ENCODE measurements at regions of chr15 and their contacts with region 1.

Region 1: DNA sequence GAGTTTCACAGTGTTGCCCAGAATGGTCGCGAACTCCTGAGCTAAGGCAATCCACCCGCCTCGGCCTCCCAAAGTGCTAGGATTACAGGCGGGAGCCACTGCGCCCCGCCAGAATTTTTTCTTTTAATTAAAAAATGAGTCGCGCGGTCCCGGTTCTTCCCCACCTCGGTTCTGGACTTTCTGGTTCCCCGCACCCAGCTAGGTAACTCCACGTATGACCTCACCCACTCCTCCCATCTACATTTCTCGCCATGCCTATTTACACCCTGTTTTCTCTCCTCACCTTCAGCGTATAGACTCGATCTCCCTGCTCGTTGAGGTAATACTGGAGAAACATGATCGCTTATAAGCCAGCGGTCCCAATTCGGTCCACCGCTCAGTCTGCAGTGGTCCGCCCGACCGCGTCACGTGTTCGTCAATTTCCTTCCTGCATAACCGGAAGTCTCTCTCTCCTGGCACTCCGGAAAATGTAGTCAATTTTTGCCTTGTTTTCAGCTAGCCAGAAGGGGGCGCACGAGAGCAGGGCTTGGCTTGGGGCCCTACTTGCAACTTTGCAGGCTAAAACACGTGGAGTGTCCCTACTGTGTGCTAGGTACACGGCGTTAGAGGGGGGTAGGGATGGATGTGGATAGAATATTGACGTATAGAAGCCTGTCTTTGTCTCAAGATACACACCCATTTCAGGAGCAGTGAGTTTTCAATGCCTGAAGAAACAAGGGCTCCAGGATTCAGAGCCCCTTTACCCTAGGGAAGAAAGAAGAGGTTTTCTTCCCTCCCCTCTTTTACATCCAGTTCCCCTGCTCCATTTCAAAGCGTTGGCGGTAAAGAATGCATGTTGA is at the starts of genes NOP10 and NUTM1:
- DNase-seq: peak; percentile 87
- ATAC-seq: peak; percentile 91
- H3K4me3 ChIP-seq: peak within 1 kb of the TSS; percentile 81 to 82
- H3K27ac ChIP-seq: peak within 1 kb of the TSS; percentile 96
- H3K4me1 ChIP-seq: peaks cover 23% of the 10 kb centered on the region
- H3K27me3 ChIP-seq: no peaks in the 10 kb centered on the region
- CTCF ChIP-seq: peak; percentile 99
- total RNA-seq, gene NOP10: 306 TPM
- total RNA-seq, gene NUTM1: 0.05 TPM

Region 2: DNA sequence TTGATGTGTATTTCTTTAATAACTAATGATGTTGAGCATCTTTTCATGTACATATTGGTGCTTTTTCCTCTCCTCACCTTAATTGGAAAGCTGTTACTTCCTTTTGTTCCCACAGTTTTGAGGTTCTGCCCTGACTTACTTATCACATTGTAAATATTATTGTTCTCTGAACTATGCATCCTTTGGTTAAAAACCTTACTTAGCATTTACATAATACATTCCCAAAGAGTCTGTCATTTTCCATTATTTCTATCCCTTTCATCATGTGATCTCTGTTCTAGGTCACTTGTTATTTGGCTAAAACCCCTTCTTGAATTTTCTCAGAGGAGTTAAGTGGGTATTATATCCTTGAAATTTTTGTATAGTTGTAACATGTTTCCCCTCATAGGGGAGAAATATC is 38.3 kb before region 1 on chr15:
- CTCF ChIA-PET with region 1: interaction called, 4 read pairs
- POLR2A ChIA-PET with region 1: interaction called, 15 read pairs
- in situ Hi-C with region 1: no loop called
- intact Hi-C with region 1: no loop called
- DNase-seq: no peak
- ATAC-seq: no peak
- H3K4me3 ChIP-seq: no peak overlapping the region
- H3K27ac ChIP-seq: no peak overlapping the region
- H3K4me1 ChIP-seq: no peaks in the 10 kb centered on the region
- H3K27me3 ChIP-seq: no peaks in the 10 kb centered on the region
- CTCF ChIP-seq: no peak

Region 3: GRCh38 chr15:34355241-34355640 is 12.3 kb after region 1 on chr15:
- CTCF ChIA-PET with region 1: interaction called, 12 read pairs
- POLR2A ChIA-PET with region 1: interaction called, 5 read pairs
- in situ Hi-C with region 1: no loop called
- intact Hi-C with region 1: no loop called
- DNase-seq: no peak
- ATAC-seq: no peak
- H3K4me3 ChIP-seq: no peak overlapping the region
- H3K27ac ChIP-seq: no peak overlapping the region
- H3K4me1 ChIP-seq: no peaks in the 10 kb centered on the region
- H3K27me3 ChIP-seq: no peaks in the 10 kb centered on the region
- CTCF ChIP-seq: no peak

Region 4: GRCh38 chr15:34360310-34360709 is 17.4 kb after region 1 on chr15:
- CTCF ChIA-PET with region 1: interaction called, 12 read pairs
- POLR2A ChIA-PET with region 1: no interaction called
- in situ Hi-C with region 1: no loop called
- intact Hi-C with region 1: no loop called
- DNase-seq: no peak
- ATAC-seq: 0 out of 2 replicates have a peak, but pooled peaks have one; percentile 40
- H3K4me3 ChIP-seq: no peak overlapping the region
- H3K27ac ChIP-seq: no peak overlapping the region
- H3K4me1 ChIP-seq: peaks cover under 1% of the 10 kb centered on the region; the same call in 1 of the 2 replicates
- H3K27me3 ChIP-seq: no peaks in the 10 kb centered on the region
- CTCF ChIP-seq: no peak

Region 5: GRCh38 chr15:34621675-34622074 is 278.7 kb after region 1 on chr15:
- CTCF ChIA-PET with region 1: no interaction called
- POLR2A ChIA-PET with region 1: no interaction called
- in situ Hi-C with region 1: no loop called
- intact Hi-C with region 1: no loop called
- DNase-seq: no peak
- ATAC-seq: peak; percentile 86
- H3K4me3 ChIP-seq: no peak overlapping the region
- H3K27ac ChIP-seq: no peak overlapping the region
- H3K4me1 ChIP-seq: no peaks in the 10 kb centered on the region; the same call in 1 of the 2 replicates
- H3K27me3 ChIP-seq: peaks cover 3% of the 10 kb centered on the region; the same call in 1 of the 2 replicates
- CTCF ChIP-seq: peak; percentile 67; the same call in 1 of the 2 replicates